Naive thymus-derived CD4-positive, alpha-beta T cell (primary cell): ENCODE measurements at regions of chr14 and their contacts with region 1.

Region 1: GRCh38 chr14:75660630-75661494 is at the starts of genes ERG28 and TTLL5:
- DNase-seq: peak; percentile 94 to 98 (median 97)
- ATAC-seq: peak; percentile 95
- H3K4me3 ChIP-seq: peak within 1 kb of the TSS; percentile 86
- H3K4me3 Mint-ChIP-seq: peak within 1 kb of the TSS; percentile 93 to 100 (median 98)
- H3K27ac ChIP-seq: peak within 1 kb of the TSS; percentile 89
- H3K27ac Mint-ChIP-seq: peak within 1 kb of the TSS; percentile 94 to 100 (median 97)
- H3K4me1 ChIP-seq: peaks cover 0 to 6% of the 10 kb centered on the region in 2 donors
- H3K4me1 Mint-ChIP-seq: peaks cover 11 to 48% (median 39%) of the 10 kb centered on the region in 7 donors
- H3K27me3 ChIP-seq: no peaks in the 10 kb centered on the region
- H3K27me3 Mint-ChIP-seq: peaks cover 0 to 6% (median 0%) of the 10 kb centered on the region in 5 donors
- total RNA-seq, gene ERG28: 7.6 to 17.0 (median 12.4) TPM
- total RNA-seq, gene TTLL5: 21.0 to 31.4 (median 21.6) TPM

Region 2: GRCh38 chr14:74018586-74019407 is 1642.1 kb before region 1 on chr14 and contains the starts of genes BBOF1 and ENTPD5:
- CTCF ChIA-PET with region 1: no interaction called
- POLR2A ChIA-PET with region 1: no interaction called
- intact Hi-C with region 1: loop called in 1 of 2 experiments (anchors 1 kb)
- DNase-seq: peak; percentile 83 to 89 (median 88)
- ATAC-seq: peak; percentile 98
- H3K4me3 ChIP-seq: peak within 1 kb of the TSS; percentile 79
- H3K4me3 Mint-ChIP-seq: peak within 1 kb of the TSS; percentile 80 to 97 (median 94)
- H3K27ac ChIP-seq: peak within 1 kb of the TSS; percentile 93
- H3K27ac Mint-ChIP-seq: peak within 1 kb of the TSS; percentile 89 to 98 (median 96)
- H3K4me1 ChIP-seq: peaks cover 6 to 10% of the 10 kb centered on the region in 2 donors
- H3K4me1 Mint-ChIP-seq: peaks cover 7 to 24% (median 14%) of the 10 kb centered on the region in 7 donors
- H3K27me3 ChIP-seq: no peaks in the 10 kb centered on the region
- H3K27me3 Mint-ChIP-seq: peaks cover 0 to 2% (median 0%) of the 10 kb centered on the region in 5 donors
- total RNA-seq, gene BBOF1: 0.80 to 4.0 (median 2.6) TPM
- total RNA-seq, gene ENTPD5: 8.6 to 17.1 (median 11.2) TPM

Region 3: GRCh38 chr14:74762917-74763802 is 897.7 kb before region 1 on chr14 and contains the start of gene YLPM1:
- CTCF ChIA-PET with region 1: no interaction called
- POLR2A ChIA-PET with region 1: no interaction called
- intact Hi-C with region 1: loop called in 1 of 2 experiments (anchors 1 kb)
- DNase-seq: peak; percentile 79 to 97 (median 95)
- ATAC-seq: peak; percentile 98
- H3K4me3 ChIP-seq: peak within 1 kb of the TSS; percentile 58
- H3K4me3 Mint-ChIP-seq: peak within 1 kb of the TSS; percentile 86 to 99 (median 95)
- H3K27ac ChIP-seq: peak within 1 kb of the TSS; percentile 93
- H3K27ac Mint-ChIP-seq: peak within 1 kb of the TSS; percentile 87 to 97 (median 95)
- H3K4me1 ChIP-seq: peaks cover 31 to 38% of the 10 kb centered on the region in 2 donors
- H3K4me1 Mint-ChIP-seq: peaks cover 43 to 56% (median 49%) of the 10 kb centered on the region in 7 donors
- H3K27me3 ChIP-seq: no peaks in the 10 kb centered on the region
- H3K27me3 Mint-ChIP-seq: peaks cover 0 to 2% (median 0%) of the 10 kb centered on the region in 5 donors
- total RNA-seq, gene YLPM1: 84.7 to 119 (median 109) TPM

Region 4: GRCh38 chr14:75249251-75249957 is 411.5 kb before region 1 on chr14:
- CTCF ChIA-PET with region 1: no interaction called
- POLR2A ChIA-PET with region 1: no interaction called
- intact Hi-C with region 1: loop called (anchors 2 to 5 kb)
- DNase-seq: peak; percentile 46 to 96 (median 93)
- ATAC-seq: peak; percentile 86
- H3K4me3 ChIP-seq: peak overlapping the region; percentile 48
- H3K4me3 Mint-ChIP-seq: peak overlapping the region; percentile 58 to 83 (median 67)
- H3K27ac ChIP-seq: peak overlapping the region; percentile 81
- H3K27ac Mint-ChIP-seq: peak overlapping the region; percentile 83 to 98 (median 96)
- H3K4me1 ChIP-seq: peaks cover 51 to 61% of the 10 kb centered on the region in 2 donors
- H3K4me1 Mint-ChIP-seq: peaks cover 39 to 81% (median 72%) of the 10 kb centered on the region in 7 donors
- H3K27me3 ChIP-seq: no peaks in the 10 kb centered on the region
- H3K27me3 Mint-ChIP-seq: peaks cover 0 to 57% (median 0%) of the 10 kb centered on the region in 5 donors

Region 5: GRCh38 chr14:75982266-75983018 is 321.6 kb after region 1 on chr14:
- CTCF ChIA-PET with region 1: no interaction called
- POLR2A ChIA-PET with region 1: no interaction called
- intact Hi-C with region 1: loop called (anchors 1 kb)
- DNase-seq: peak; percentile 69 to 83 (median 80)
- ATAC-seq: peak; percentile 83
- H3K4me3 ChIP-seq: peak overlapping the region; percentile 83
- H3K4me3 Mint-ChIP-seq: peak overlapping the region; percentile 80 to 99 (median 88)
- H3K27ac ChIP-seq: peak overlapping the region; percentile 84
- H3K27ac Mint-ChIP-seq: peak overlapping the region; percentile 58 to 97 (median 90)
- H3K4me1 ChIP-seq: peaks cover 18 to 32% of the 10 kb centered on the region in 2 donors
- H3K4me1 Mint-ChIP-seq: peaks cover 43 to 64% (median 56%) of the 10 kb centered on the region in 7 donors
- H3K27me3 ChIP-seq: no peaks in the 10 kb centered on the region
- H3K27me3 Mint-ChIP-seq: peaks cover 0 to 24% (median 0%) of the 10 kb centered on the region in 5 donors

Region 6: DNA sequence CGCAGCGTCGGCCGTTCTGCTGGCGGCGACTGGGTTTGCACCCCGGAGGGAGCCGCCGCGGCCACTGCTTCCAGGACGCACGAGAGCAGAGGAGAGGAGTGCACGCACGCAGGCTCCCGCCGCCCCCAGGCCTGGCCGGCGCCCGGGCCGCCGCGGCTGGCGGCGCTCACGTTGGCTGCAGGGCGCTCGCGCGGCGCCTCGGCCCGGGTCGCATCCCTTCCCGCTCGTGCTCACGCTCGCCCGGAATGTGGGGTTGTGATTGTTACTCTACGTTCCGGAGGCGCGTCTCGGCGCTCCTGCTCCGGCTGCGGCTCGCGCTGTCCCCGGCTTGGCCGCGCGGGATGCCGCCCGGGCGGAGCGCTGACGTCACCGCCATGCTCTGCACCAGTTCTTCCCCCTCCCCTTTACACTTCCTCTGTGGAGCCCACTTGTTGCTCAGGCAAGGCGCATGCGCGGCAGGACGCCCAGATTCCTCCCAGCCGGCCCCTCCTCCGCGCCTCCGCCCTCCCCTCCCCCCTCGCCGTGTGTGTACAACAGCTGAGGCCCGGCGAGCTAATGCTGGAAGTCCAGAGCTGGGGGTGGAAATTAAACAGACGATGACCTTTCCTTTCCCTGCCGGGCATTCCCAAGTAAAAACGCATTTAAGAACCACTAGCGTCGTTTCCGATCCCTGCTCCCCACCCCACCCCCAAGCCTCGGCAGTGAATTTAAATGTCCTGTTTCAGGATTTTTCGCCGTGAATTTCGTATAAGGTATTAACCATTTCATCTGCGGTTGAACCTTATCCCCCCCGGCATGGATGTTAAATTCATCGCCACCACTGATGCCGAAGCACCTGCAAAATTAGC is 1367.7 kb after region 1 on chr14 and contains the start of gene IRF2BPL:
- CTCF ChIA-PET with region 1: no interaction called
- POLR2A ChIA-PET with region 1: no interaction called
- intact Hi-C with region 1: loop called in 1 of 2 experiments (anchors 5 kb)
- DNase-seq: peak; percentile 90 to 96 (median 94)
- ATAC-seq: peak; percentile 82
- H3K4me3 ChIP-seq: peak within 1 kb of the TSS; percentile 81
- H3K4me3 Mint-ChIP-seq: peak within 1 kb of the TSS; percentile 93 to 99 (median 98)
- H3K27ac ChIP-seq: peak within 1 kb of the TSS; percentile 98
- H3K27ac Mint-ChIP-seq: peak within 1 kb of the TSS; percentile 97 to 100 (median 99)
- H3K4me1 ChIP-seq: peaks cover 43 to 57% of the 10 kb centered on the region in 2 donors
- H3K4me1 Mint-ChIP-seq: peaks cover 33 to 65% (median 58%) of the 10 kb centered on the region in 7 donors
- H3K27me3 ChIP-seq: no peaks in the 10 kb centered on the region
- H3K27me3 Mint-ChIP-seq: no peaks in the 10 kb centered on the region
- total RNA-seq, gene IRF2BPL: 30.2 to 45.2 (median 34.6) TPM